SK-MEL-5 (cell line): ENCODE measurements at regions of chr17 and their contacts with region 1.

Region 1: GRCh38 chr17:72539981-72540897 is 419.4 kb downstream of the SOX9 start:
- DNase-seq: peak; percentile 75

Region 2: GRCh38 chr17:71237903-71238538 is 1302.2 kb before region 1 on chr17:
- in situ Hi-C with region 1: loop called (anchors 25 kb)
- DNase-seq: peak; percentile 75

Region 3: GRCh38 chr17:71494062-71494855 is 1046.0 kb before region 1 on chr17:
- in situ Hi-C with region 1: loop called (anchors 25 kb)
- DNase-seq: no peak

Region 4: GRCh38 chr17:72362376-72363088 is 177.7 kb before region 1 on chr17:
- in situ Hi-C with region 1: no loop called
- DNase-seq: no peak